Activated T-helper 2 cell treated with anti-CD3 and anti-CD28 coated beads, Interferon-gamma antibody, Interleukin-2, Interleukin-4, amounts not matched to agents 10 μg/mL and 5 μg/mL and 100 μg/mL, durations not matched to agents 14 hours and 24 hours and 36 hours (primary cell): ENCODE measurements at regions of chr5 and their contacts with region 1.

Region 1: GRCh38 chr5:173781814-173782670 is 106.1 kb upstream of the CPEB4 start:
- DNase-seq: peak; percentile 37
- H3K4me3 Mint-ChIP-seq: no peak overlapping the region
- H3K27ac Mint-ChIP-seq: peak overlapping the region; percentile 85
- H3K4me1 Mint-ChIP-seq: peaks cover 20% of the 10 kb centered on the region
- H3K27me3 Mint-ChIP-seq: no peaks in the 10 kb centered on the region

Region 2: GRCh38 chr5:173887610-173888472 is 105.8 kb after region 1 on chr5 and contains the start of gene CPEB4:
- intact Hi-C with region 1: loop called (anchors 10 kb)
- DNase-seq: peak; percentile 96
- H3K4me3 Mint-ChIP-seq: peak within 1 kb of the TSS; percentile 92
- H3K27ac Mint-ChIP-seq: peak within 1 kb of the TSS; percentile 99
- H3K4me1 Mint-ChIP-seq: peaks cover 61% of the 10 kb centered on the region
- H3K27me3 Mint-ChIP-seq: no peaks in the 10 kb centered on the region
- total RNA-seq, gene CPEB4: 8.1 and 12.2 TPM in 2 replicates

Region 3: GRCh38 chr5:173917788-173918786 is 136.0 kb after region 1 on chr5:
- intact Hi-C with region 1: loop called (anchors 5 kb)
- DNase-seq: peak; percentile 34
- H3K4me3 Mint-ChIP-seq: no peak overlapping the region
- H3K27ac Mint-ChIP-seq: no peak overlapping the region
- H3K4me1 Mint-ChIP-seq: peaks cover 5% of the 10 kb centered on the region
- H3K27me3 Mint-ChIP-seq: no peaks in the 10 kb centered on the region

Region 4: GRCh38 chr5:173972925-173973615 is 191.0 kb after region 1 on chr5:
- intact Hi-C with region 1: loop called (anchors 10 kb)
- DNase-seq: peak; percentile 58
- H3K4me3 Mint-ChIP-seq: peak overlapping the region; percentile 71
- H3K27ac Mint-ChIP-seq: no peak overlapping the region
- H3K4me1 Mint-ChIP-seq: peaks cover 7% of the 10 kb centered on the region
- H3K27me3 Mint-ChIP-seq: peaks cover 26% of the 10 kb centered on the region